HEK293 (cell line): ENCODE measurements at regions of chr15 and their contacts with region 1.

Region 1: GRCh38 chr15:41989259-41989933 is 17.0 kb upstream of the EHD4 start:
- H3K4me3 ChIP-seq: no peak overlapping the region
- H3K27ac ChIP-seq: no peak overlapping the region
- H3K4me1 ChIP-seq: no peaks in the 10 kb centered on the region
- CTCF ChIP-seq: peak; percentile 73

Region 2: GRCh38 chr15:41914411-41914810 is 75.0 kb before region 1 on chr15:
- CTCF ChIA-PET with region 1: no interaction called
- POLR2A ChIA-PET with region 1: no interaction called
- H3K4me3 ChIP-seq: no peak overlapping the region
- H3K27ac ChIP-seq: no peak overlapping the region
- H3K4me1 ChIP-seq: no peaks in the 10 kb centered on the region
- CTCF ChIP-seq: no peak

Region 3: DNA sequence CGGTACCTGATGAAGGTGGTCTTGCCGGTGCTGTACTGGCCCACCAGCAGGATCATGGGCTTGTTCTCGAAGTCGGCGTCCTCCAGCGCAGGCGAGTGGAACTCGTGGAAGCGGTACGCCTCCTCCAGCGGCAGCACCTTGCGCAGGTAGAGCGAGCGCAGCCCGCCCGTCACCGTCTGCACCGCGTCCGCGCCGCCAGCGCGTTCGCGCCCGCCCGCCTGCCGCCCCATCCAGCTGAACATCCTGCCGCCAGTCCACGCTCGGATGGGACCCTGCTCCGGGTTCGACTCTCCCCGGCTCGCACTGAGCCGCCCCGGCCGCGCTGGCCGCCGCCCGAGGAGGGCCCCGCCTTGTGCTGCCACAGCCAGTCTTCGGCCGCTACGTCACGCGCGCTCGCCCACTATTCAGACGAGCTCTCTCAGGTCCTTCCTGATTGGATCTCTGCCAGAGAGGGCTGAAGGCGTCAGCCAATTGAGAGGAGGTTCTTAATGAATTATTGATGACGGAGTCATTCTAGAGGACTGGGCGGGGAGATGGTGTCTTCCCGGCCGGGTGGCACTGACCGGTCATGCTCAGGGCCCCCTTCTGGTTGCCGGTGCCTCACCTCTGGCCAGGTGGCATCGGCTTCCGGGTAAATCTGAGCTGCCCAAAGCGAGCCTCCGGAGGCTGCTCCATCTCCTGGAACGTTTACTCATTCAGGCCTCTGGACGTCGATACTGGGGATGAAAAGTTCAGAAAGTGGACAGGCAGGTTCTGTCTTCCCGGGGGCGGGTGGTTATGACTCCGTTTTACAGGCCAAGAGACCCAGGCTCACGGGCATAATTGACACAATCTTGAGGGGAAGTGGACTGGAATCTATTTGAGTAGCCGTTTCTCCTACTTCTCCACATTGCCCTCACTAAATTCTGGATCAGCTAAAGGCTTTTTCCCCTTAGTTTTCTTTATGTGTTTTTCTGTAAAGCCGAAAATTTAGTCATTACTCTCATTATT is 16.8 kb before region 1 on chr15 and contains the start of gene EHD4:
- CTCF ChIA-PET with region 1: interaction called, 12 read pairs
- POLR2A ChIA-PET with region 1: interaction called, 3 read pairs
- H3K4me3 ChIP-seq: peak within 1 kb of the TSS; percentile 74
- H3K27ac ChIP-seq: peak within 1 kb of the TSS; percentile 57; the same call in 1 of the 2 replicates
- H3K4me1 ChIP-seq: peaks cover 10% of the 10 kb centered on the region
- CTCF ChIP-seq: peak; percentile 49; the same call in 1 of the 2 replicates

Region 4: GRCh38 chr15:42056934-42057779 is 67.8 kb after region 1 on chr15:
- CTCF ChIA-PET with region 1: interaction called, 35 read pairs
- POLR2A ChIA-PET with region 1: no interaction called
- H3K4me3 ChIP-seq: peak overlapping the region; percentile 12
- H3K27ac ChIP-seq: no peak overlapping the region
- H3K4me1 ChIP-seq: no peaks in the 10 kb centered on the region
- CTCF ChIP-seq: peak; percentile 86

Region 5: DNA sequence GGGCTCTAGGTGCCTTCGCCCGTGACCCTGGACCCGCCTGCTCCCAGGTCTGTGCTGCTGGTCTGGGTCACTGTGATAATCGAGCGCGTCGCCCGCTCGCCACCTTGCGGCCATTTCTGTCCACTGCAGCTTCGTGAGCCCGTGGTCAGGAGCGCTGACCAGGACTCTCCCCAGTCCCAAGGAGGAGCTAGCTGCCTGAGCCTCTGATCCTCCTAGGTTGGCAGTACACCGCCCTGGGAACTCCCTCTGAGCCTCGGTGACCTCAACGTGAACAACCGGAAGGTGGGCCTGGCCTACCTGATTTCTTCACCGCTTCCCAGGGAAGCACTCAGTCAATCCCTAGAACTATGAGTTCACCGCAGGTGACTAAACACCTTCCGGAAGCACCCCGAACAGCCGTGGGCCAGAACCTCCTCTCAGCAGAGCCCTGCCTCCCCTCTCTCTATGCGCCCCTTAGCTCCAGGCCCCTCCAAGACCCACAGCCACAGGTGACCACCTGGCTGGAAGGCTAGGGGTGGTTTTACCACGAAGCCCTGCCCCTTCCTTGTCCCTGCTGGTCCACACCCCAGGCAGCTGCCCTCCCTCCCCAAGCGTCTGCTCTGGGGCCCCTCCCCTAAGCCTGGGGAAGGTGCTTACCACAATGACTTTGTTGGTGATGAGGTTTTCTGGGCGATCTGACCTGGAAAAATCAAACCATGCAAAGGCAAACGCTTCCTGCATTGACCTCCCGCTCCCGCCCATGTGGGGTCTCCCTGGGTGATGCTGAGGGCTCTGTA is 95.3 kb after region 1 on chr15:
- CTCF ChIA-PET with region 1: interaction called, 32 read pairs
- POLR2A ChIA-PET with region 1: no interaction called
- H3K4me3 ChIP-seq: no peak overlapping the region
- H3K27ac ChIP-seq: no peak overlapping the region
- H3K4me1 ChIP-seq: no peaks in the 10 kb centered on the region
- CTCF ChIP-seq: peak; percentile 78

Region 6: GRCh38 chr15:42137431-42138261 is 148.2 kb after region 1 on chr15:
- CTCF ChIA-PET with region 1: interaction called, 15 read pairs
- POLR2A ChIA-PET with region 1: no interaction called
- H3K4me3 ChIP-seq: no peak overlapping the region
- H3K27ac ChIP-seq: no peak overlapping the region
- H3K4me1 ChIP-seq: no peaks in the 10 kb centered on the region
- CTCF ChIP-seq: no peak